PC-9 (cell line): ENCODE measurements at regions of chr13 and their contacts with region 1.

Region 1: GRCh38 chr13:108377646-108378206 is 108.2 kb downstream of the TNFSF13B start:
- DNase-seq: no peak
- H3K4me3 ChIP-seq: no peak overlapping the region
- H3K27ac ChIP-seq: no peak overlapping the region
- H3K4me1 ChIP-seq: no peaks in the 10 kb centered on the region
- H3K27me3 ChIP-seq: peaks cover 2% of the 10 kb centered on the region
- CTCF ChIP-seq: no peak

Region 2: DNA sequence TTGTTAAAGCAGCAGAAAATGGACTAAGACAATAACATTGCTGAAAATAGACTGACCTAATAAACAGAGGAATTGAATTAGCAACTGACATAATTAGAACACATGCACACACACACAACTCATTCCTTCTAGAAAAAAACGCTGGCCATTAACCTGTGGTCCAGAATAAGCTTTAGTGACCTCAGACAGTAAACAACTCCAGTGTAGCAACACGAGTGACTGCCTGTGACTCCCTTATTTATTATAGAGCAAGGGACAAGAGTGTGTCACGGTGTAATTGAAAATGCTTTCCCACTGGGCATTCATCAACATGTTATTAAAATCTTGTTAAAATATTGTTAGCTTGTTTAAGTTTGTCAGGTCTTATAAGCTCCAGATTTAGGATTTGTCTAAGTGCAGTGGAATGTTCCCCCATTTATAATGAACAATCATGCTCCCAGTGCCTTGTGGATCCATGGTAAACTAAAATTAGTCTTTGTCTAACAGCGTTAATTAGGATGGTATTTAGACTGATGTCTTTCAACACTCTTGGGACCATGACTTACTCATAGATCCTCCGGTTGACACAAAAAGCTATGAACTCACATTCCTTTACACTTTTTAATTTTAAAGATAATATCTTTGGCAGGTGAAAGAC is 1520.4 kb after region 1 on chr13:
- CTCF ChIA-PET with region 1: interaction called, 21 read pairs
- POLR2A ChIA-PET with region 1: no interaction called
- intact Hi-C with region 1: no loop called
- DNase-seq: no peak
- H3K4me3 ChIP-seq: no peak overlapping the region
- H3K27ac ChIP-seq: no peak overlapping the region
- H3K4me1 ChIP-seq: 0 out of 2 replicates have a peak, but pooled peaks cover 5% of the 10 kb centered on the region
- H3K27me3 ChIP-seq: no peaks in the 10 kb centered on the region
- CTCF ChIP-seq: no peak